Common myeloid progenitor, CD34-positive (primary cell): ENCODE measurements at regions of chr7 and their contacts with region 1.

Region 1: DNA sequence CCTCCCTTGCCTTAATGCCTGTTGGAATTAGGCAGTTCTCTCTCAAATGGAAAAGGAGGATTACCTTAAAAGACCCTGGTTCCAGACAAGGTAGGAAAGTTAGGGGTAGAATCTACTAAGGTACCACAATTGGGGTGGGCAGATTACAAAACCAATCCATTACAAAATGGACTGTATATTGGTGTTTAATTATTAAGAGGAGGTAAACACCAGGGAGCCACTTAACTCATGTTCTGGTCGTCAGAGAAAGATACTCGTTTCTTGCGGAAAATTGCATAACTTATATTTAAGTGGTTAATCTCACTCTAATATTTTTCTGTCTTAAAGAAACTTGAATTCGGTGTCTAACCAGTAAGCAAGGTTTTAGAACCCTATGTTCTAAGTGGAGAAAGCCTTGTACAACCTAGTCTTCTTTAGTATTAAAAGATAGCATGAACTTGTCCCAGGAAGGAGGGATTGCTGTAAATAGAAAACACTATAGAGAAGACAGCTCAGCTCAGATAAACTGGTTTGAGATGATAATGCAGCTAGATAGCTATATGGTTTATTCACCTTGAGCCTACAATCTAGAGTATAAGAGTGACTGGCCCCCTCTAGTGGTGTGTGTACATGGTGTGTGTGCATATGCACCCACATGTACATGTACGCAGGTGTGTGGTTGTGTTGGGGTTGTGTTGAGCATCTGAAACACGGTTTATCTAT is 58.0 kb upstream of the STRIP2 start:
- DNase-seq: peak; percentile 36 to 62 (median 58)
- H3K4me3 ChIP-seq: no peak overlapping the region
- H3K27ac ChIP-seq: no peak overlapping the region
- H3K4me1 ChIP-seq: peaks cover 0 to 13% (median 6%) of the 10 kb centered on the region in 4 experiments
- H3K27me3 ChIP-seq: no peaks in the 10 kb centered on the region

Region 2: GRCh38 chr7:129327076-129327475 is 49.2 kb before region 1 on chr7:
- CTCF ChIA-PET with region 1: no interaction called
- POLR2A ChIA-PET with region 1: no interaction called
- DNase-seq: no peak
- H3K4me3 ChIP-seq: no peak overlapping the region
- H3K27ac ChIP-seq: no peak overlapping the region
- H3K4me1 ChIP-seq: no peaks in the 10 kb centered on the region
- H3K27me3 ChIP-seq: no peaks in the 10 kb centered on the region

Region 3: GRCh38 chr7:129389829-129390228 is 13.6 kb after region 1 on chr7:
- CTCF ChIA-PET with region 1: interaction called, 35 read pairs
- POLR2A ChIA-PET with region 1: interaction called, 4 read pairs
- DNase-seq: no peak
- H3K4me3 ChIP-seq: no peak overlapping the region
- H3K27ac ChIP-seq: no peak overlapping the region
- H3K4me1 ChIP-seq: no peaks in the 10 kb centered on the region
- H3K27me3 ChIP-seq: no peaks in the 10 kb centered on the region

Region 4: GRCh38 chr7:129433847-129434674 is 57.8 kb after region 1 on chr7 and contains the start of gene STRIP2:
- CTCF ChIA-PET with region 1: interaction called, 13 read pairs
- POLR2A ChIA-PET with region 1: no interaction called
- DNase-seq: peak; percentile 70 to 80 (median 74)
- H3K4me3 ChIP-seq: peak within 1 kb of the TSS; percentile 63 to 82 (median 72)
- H3K27ac ChIP-seq: no peak within 1 kb of the TSS
- H3K4me1 ChIP-seq: peaks cover 2 to 25% (median 20%) of the 10 kb centered on the region in 4 experiments
- H3K27me3 ChIP-seq: peaks cover 4 to 40% (median 15%) of the 10 kb centered on the region in 5 experiments

Region 5: GRCh38 chr7:129502376-129502776 is 126.1 kb after region 1 on chr7 and contains the start of gene SMKR1:
- CTCF ChIA-PET with region 1: no interaction called
- POLR2A ChIA-PET with region 1: no interaction called
- DNase-seq: peak; percentile 86 to 95 (median 95)
- H3K4me3 ChIP-seq: peak within 1 kb of the TSS; percentile 56 to 85 (median 68)
- H3K27ac ChIP-seq: no peak within 1 kb of the TSS
- H3K4me1 ChIP-seq: peaks cover 0 to 16% (median 11%) of the 10 kb centered on the region in 4 experiments
- H3K27me3 ChIP-seq: peaks cover 0 to 2% (median 0%) of the 10 kb centered on the region in 5 experiments